Activated naive CD4-positive, alpha-beta T cell treated with anti-CD3 and anti-CD28 coated beads for 36 hours (primary cell): ENCODE measurements at regions of chr6 and their contacts with region 1.

Region 1: GRCh38 chr6:106097411-106098231 is 11.5 kb downstream of the PRDM1 start:
- DNase-seq: peak; percentile 74
- H3K4me3 Mint-ChIP-seq: peak overlapping the region; percentile 77
- H3K27ac Mint-ChIP-seq: peak overlapping the region; percentile 98
- H3K4me1 Mint-ChIP-seq: peaks cover 84% of the 10 kb centered on the region
- H3K27me3 Mint-ChIP-seq: peaks cover 10% of the 10 kb centered on the region

Region 2: GRCh38 chr6:105781248-105781647 is 316.4 kb before region 1 on chr6:
- CTCF ChIA-PET with region 1: no interaction called
- intact Hi-C with region 1: loop called (anchors 1 kb)
- DNase-seq: peak; percentile 77
- H3K4me3 Mint-ChIP-seq: no peak overlapping the region
- H3K27ac Mint-ChIP-seq: no peak overlapping the region
- H3K4me1 Mint-ChIP-seq: peaks cover 34% of the 10 kb centered on the region
- H3K27me3 Mint-ChIP-seq: no peaks in the 10 kb centered on the region

Region 3: DNA sequence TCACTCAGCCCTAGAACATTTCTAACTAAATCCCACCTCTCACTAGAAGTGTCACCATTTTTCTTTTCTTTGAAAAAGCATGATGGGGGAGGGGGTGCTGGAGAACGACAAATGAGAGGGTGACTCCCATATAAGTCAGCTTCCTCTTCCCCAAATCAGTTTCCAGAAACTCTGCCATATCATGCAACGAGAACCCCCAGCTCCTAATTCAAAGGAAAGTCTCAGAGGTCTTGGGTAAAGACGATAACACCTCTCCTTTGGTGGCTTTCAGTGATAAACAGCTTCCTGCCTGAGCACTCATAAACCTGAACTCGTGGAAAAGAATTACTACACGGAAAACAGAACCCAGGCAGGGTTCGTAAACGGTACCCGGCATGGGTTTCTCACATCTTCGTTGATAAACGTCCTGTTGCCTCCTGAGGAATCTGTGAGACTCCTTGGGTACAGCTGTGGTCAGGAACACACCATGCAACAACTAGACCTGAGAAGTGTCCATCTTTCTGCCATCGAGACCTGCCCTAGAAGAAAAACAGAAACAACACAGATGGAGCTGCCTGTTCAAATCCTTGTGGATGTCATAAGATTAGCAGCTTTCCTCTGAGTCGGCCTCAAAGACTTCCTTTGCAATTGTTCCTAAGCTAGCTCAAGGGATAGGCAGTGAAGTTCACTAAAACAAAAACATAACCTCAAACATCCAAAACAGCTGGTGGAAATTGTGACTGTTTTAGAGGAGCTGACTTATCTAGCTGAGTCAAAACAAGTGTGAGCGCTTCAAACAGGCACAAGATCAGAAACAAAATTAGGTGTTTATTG is 197.3 kb before region 1 on chr6:
- CTCF ChIA-PET with region 1: interaction called, 4 read pairs
- intact Hi-C with region 1: loop called (anchors 1 kb)
- DNase-seq: peak; percentile 52
- H3K4me3 Mint-ChIP-seq: peak overlapping the region; percentile 45
- H3K27ac Mint-ChIP-seq: peak overlapping the region; percentile 73
- H3K4me1 Mint-ChIP-seq: peaks cover 16% of the 10 kb centered on the region
- H3K27me3 Mint-ChIP-seq: peaks cover 4% of the 10 kb centered on the region

Region 4: DNA sequence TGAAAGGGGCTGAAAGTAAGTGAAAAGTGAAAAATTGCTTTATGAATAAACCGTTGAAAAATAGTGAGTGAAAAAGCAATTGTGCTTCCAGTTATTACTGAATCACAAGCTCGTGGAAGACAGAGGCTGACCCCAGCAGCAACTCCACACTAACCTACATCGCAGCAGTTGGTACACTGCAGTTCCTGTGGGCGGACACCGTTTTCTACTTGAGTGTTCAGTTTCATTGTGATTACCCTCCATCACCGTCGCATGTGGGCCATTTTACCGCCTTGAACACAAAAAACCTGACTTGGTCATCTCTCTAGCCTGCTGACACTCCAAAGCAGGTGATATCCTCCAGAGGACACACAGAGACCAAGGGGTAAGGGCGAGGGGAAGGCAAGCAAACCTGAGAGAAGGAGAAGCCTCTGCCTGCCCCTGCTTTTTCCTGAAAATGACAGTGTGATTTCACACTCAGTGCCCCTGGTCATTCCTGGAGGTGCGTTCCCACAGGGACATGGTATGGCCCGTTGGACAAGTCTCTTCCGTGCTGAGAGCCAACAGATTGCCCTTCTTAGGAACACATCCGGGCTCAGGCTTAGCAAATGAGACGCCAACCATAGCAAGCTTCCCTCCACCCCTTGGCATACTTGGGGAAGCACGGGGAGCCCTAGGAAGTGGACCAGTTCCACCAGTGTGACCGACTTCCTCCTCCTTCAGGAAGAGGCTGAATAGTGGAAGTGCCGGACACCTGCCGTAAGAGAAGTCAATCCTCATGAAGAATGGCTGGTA is 17.1 kb after region 1 on chr6:
- CTCF ChIA-PET with region 1: interaction called, 6 read pairs
- intact Hi-C with region 1: loop called (anchors 1 kb)
- DNase-seq: peak; percentile 83
- H3K4me3 Mint-ChIP-seq: no peak overlapping the region
- H3K27ac Mint-ChIP-seq: peak overlapping the region; percentile 52
- H3K4me1 Mint-ChIP-seq: peaks cover 70% of the 10 kb centered on the region
- H3K27me3 Mint-ChIP-seq: peaks cover 31% of the 10 kb centered on the region

Region 5: DNA sequence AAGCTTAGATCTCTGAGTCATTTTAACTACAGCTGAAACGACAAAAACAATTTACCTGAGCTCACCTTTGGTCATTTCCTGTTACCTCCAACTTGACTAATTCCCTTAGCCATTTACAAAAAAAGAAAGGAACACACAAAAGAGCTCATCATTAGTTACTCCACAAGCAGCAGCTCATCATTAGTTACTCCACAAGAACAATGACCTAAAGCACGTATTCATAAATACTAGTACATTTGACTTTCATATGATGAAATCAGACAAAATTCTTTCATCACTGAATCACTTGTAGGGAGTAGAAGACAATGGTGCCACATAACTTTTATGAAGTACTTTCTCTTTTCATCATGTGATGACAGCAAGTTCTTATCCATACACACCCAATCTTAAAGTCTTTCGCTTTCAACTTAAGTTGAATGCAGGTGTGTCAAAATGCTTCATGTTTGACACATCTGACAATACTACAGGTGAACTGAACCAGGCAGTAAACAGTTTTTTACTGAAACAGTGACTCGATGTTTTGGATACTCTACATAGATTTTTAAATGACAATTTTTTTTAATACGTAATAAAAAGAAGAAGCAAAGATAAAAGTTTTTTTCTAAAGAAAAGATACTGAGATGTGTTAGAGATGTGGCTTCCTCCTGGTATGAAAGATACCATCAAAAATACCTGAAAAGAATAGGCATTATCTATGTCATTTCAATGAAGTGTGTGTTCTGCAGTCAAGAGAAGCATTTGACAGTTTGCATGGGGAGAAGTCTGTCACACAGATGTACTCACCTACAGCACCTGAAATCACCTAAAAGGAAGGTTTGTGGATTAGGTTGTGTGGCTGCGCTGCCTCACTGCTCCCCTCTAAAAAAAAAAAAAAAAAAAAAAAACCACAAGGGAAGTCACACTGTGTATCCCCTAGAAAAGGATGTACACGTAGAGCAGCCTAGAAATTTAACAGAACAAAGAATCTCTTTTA is 97.6 kb after region 1 on chr6:
- CTCF ChIA-PET with region 1: no interaction called
- intact Hi-C with region 1: loop called (anchors 1 kb)
- DNase-seq: no peak
- H3K4me3 Mint-ChIP-seq: peak overlapping the region; percentile 59
- H3K27ac Mint-ChIP-seq: peak overlapping the region; percentile 88
- H3K4me1 Mint-ChIP-seq: peaks cover 38% of the 10 kb centered on the region
- H3K27me3 Mint-ChIP-seq: no peaks in the 10 kb centered on the region

Region 6: GRCh38 chr6:106444777-106445507 is 347.3 kb after region 1 on chr6:
- CTCF ChIA-PET with region 1: no interaction called
- intact Hi-C with region 1: loop called (anchors 10 kb)
- DNase-seq: peak; percentile 23
- H3K4me3 Mint-ChIP-seq: no peak overlapping the region
- H3K27ac Mint-ChIP-seq: no peak overlapping the region
- H3K4me1 Mint-ChIP-seq: peaks cover 16% of the 10 kb centered on the region
- H3K27me3 Mint-ChIP-seq: peaks cover 15% of the 10 kb centered on the region

Region 7: GRCh38 chr6:107820338-107821261 is 1723.0 kb after region 1 on chr6:
- CTCF ChIA-PET with region 1: no interaction called
- intact Hi-C with region 1: loop called (anchors 5 kb)
- DNase-seq: peak; percentile 55
- H3K4me3 Mint-ChIP-seq: peak overlapping the region; percentile 88
- H3K27ac Mint-ChIP-seq: peak overlapping the region; percentile 98
- H3K4me1 Mint-ChIP-seq: peaks cover 83% of the 10 kb centered on the region
- H3K27me3 Mint-ChIP-seq: no peaks in the 10 kb centered on the region